CD4-positive, alpha-beta T cell (primary cell): ENCODE measurements at regions of chr10 and their contacts with region 1.

Region 1: GRCh38 chr10:931416-932318 is at the start of gene LARP4B:
- DNase-seq: peak; percentile 92 to 99 (median 96)
- ATAC-seq: peak; percentile 97
- H3K4me3 ChIP-seq: peak within 1 kb of the TSS; percentile 64
- H3K4me3 Mint-ChIP-seq: peak within 1 kb of the TSS; percentile 98
- H3K27ac ChIP-seq: peak within 1 kb of the TSS; percentile 50 to 89
- H3K27ac Mint-ChIP-seq: peak within 1 kb of the TSS; percentile 89
- H3K4me1 ChIP-seq: peaks cover 27% of the 10 kb centered on the region
- H3K4me1 Mint-ChIP-seq: peaks cover 48% of the 10 kb centered on the region
- H3K27me3 ChIP-seq: no peaks in the 10 kb centered on the region
- H3K27me3 Mint-ChIP-seq: no peaks in the 10 kb centered on the region
- CTCF ChIP-seq: no peak
- total RNA-seq, gene LARP4B: 33.1 to 40.2 TPM

Region 2: GRCh38 chr10:1056326-1057105 is 124.8 kb after region 1 on chr10 and contains the start of gene WDR37:
- CTCF ChIA-PET with region 1: interaction called, 4 read pairs
- POLR2A ChIA-PET with region 1: interaction called, 4 read pairs
- intact Hi-C with region 1: loop called (anchors 1 to 5 kb)
- DNase-seq: peak; percentile 77 to 93 (median 86)
- ATAC-seq: peak; percentile 89
- H3K4me3 ChIP-seq: peak within 1 kb of the TSS; percentile 98
- H3K4me3 Mint-ChIP-seq: peak within 1 kb of the TSS; percentile 98
- H3K27ac ChIP-seq: peak within 1 kb of the TSS; percentile 69 to 83
- H3K27ac Mint-ChIP-seq: peak within 1 kb of the TSS; percentile 98
- H3K4me1 ChIP-seq: peaks cover 48% of the 10 kb centered on the region
- H3K4me1 Mint-ChIP-seq: peaks cover 91% of the 10 kb centered on the region
- H3K27me3 ChIP-seq: no peaks in the 10 kb centered on the region
- H3K27me3 Mint-ChIP-seq: no peaks in the 10 kb centered on the region
- CTCF ChIP-seq: no peak
- total RNA-seq, gene WDR37: 17.0 to 17.7 TPM

Region 3: DNA sequence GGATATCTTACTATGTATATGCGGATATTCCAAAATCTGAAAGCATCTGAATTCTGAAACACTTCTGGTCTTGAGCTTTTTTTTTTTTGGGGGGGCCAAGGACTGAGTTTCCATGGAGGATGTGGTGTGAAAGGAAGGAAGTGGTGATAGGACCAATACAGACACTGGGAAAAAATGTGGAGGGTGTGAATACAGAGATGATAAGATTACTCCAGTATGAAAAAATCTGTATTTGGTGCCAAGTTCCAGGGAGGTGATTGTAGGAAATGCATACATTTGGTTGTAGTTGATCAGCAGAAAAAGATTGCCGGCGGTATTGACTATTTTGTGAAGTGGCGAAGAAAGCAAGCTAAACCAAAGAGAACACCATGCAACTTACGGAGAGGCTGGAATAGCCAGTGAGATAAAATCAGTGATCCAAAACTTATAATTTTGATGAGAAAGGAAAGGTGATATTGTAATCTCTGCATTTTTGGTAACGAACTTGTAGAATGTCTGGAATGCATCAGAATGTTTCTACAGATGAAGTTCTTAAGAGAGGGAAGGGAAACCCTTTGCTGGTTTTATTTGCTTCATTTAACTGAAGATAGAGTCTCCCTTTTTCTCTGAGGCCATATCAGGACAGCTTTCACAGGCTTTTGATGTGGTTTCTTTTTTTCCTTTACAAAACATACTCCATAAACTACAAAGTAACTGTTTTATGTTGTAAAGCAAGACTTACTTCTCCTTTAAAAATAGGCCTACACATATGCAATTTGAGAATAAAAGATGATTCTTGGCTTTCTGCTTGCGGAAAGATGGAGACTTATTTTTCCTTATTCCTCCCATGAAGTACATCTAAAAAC is 130.5 kb after region 1 on chr10:
- CTCF ChIA-PET with region 1: no interaction called
- POLR2A ChIA-PET with region 1: interaction called, 5 read pairs
- intact Hi-C with region 1: loop called (anchors 1 to 5 kb)
- DNase-seq: peak in 1 of 14 experiments; percentile 41
- ATAC-seq: no peak
- H3K4me3 ChIP-seq: peak overlapping the region; percentile 21
- H3K4me3 Mint-ChIP-seq: peak overlapping the region; percentile 81
- H3K27ac ChIP-seq: peak overlapping the region; percentile 55 to 65
- H3K27ac Mint-ChIP-seq: peak overlapping the region; percentile 98
- H3K4me1 ChIP-seq: peaks cover 63% of the 10 kb centered on the region
- H3K4me1 Mint-ChIP-seq: peaks cover 92% of the 10 kb centered on the region
- H3K27me3 ChIP-seq: no peaks in the 10 kb centered on the region
- H3K27me3 Mint-ChIP-seq: no peaks in the 10 kb centered on the region
- CTCF ChIP-seq: no peak